ENCODE measurements at regions of chr18 and their contacts with region 1.

Region 1: DNA sequence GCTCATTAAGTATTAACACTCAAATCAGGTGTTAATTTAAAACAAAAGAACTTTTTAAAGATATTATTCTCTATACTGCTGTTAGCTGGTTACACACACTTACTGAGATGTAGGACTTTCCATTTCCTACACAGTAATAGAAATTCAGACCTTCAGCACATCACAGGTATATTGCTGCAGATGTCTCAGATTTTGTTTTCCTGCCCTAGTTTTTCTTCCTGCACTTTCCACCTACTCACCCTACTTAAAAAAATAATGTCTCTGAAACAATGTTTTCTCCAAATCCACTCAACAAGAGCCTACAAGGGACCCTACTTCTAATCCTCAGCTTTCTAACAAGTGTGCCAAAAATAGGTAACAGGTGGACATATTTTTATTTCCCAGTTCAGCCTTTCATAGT is 43.9 kb downstream of the DYM start:
- DNase-seq: no peak
- H3K4me3 ChIP-seq: no peak overlapping the region
- CTCF ChIP-seq: no peak

Region 2: GRCh38 chr18:49250816-49251388 is 165.6 kb before region 1 on chr18:
- CTCF ChIA-PET with region 1: interaction called, 21 read pairs
- POLR2A ChIA-PET with region 1: no interaction called
- DNase-seq: no peak
- H3K4me3 ChIP-seq: no peak overlapping the region
- CTCF ChIP-seq: peak; percentile 41